Head of caudate nucleus (tissue), 42 donors: ENCODE measurements at regions of chr4 and their contacts with region 1.

Region 1: GRCh38 chr4:139099366-139099982 is 77.5 kb downstream of the ELF2 start:
- DNase-seq: peak; percentile 25 to 87 (median 72)

Region 2: GRCh38 chr4:139171876-139172691 is 72.6 kb after region 1 on chr4:
- intact Hi-C with region 1: loop called (anchors 5 kb)
- DNase-seq: no peak

Region 3: DNA sequence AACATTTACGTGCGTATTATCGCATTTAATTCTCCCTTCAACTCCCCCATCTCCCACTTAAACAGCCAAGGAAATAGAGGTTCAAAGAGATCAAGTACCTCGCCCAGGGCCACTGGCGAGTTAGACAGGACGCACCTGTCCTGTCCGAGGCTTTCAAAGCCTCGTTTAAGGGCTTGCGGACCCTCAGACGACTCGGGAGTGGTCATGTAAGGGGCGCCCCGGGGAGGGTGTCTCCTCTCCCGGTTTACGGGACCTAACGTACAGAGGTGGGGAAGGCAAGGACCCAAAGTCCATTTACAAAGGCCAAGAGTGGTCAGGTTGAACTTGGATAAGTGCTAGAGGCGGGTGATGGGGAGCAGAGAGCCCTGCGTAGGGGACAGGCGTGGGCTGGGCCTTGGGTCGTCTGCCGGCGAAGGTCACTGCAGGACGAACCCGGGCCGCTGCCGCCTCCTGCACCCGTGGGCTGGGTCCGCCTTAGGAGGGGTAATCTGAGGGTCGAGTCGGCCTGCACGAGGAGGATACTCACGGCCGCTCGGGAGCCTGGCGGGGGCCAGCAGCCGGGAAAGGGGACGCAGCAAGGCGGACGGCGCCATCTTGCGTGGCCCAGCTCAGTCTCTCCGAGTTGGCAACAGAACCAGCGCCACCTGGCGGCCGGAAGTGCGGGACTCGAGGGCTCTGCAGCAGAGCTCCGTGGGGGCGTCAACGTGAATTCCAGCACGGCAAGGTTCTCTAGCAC is 195.9 kb after region 1 on chr4:
- intact Hi-C with region 1: loop called (anchors 5 kb)
- DNase-seq: peak; percentile 96 to 100 (median 99)